Heart left ventricle (tissue), 16 donors: ENCODE measurements at regions of chr1 and their contacts with region 1.

Region 1: DNA sequence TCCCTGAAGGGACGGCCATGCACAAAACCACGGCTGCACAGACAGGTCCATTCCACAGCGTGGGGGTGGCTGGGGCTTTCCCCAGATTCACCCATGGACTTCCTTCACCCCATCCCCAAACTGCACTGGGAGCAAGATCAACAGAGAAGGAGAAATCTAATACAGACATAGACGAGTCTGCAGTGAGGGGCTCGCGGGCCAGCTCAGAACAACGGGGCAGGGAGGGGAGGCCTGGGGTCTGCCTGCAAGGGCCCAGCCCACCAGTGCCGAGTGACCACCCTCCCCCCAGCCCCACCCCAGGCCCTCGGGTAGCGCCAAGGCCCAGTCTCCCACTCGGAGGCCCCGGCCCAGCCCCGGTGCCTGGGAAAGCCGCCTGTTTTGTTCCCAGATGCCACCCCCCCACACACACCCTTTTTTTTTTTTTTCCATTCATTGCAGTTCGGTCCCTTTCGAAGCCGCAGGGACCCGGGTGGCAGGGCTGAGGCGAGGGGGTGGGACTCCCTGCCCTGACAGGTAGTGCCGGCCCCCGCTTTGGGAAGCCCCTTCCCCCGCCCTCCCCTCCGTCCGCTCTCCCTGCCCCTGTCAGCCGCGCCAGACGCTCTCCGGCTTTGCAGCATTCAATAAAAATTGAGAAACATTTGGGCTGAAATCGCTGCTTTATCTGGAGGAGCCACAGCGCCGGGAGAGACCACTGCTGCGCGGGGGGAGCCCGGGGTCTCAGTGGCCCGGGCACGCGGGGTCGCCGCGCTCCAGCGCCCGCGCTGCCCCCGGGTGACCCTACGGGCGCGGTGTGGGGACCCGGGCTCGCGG is 543 bp upstream of the EPHB2 start:
- DNase-seq: peak; percentile 34 to 76 (median 57)
- ATAC-seq: peak in 3 of 4 donors; percentile 35 to 57 (median 43)
- H3K4me3 ChIP-seq: peak overlapping the region in 11 of 12 donors; percentile 24 to 58 (median 43)
- H3K27ac ChIP-seq: peak overlapping the region in 1 of 12 donors; percentile 42
- H3K4me1 ChIP-seq: peaks cover 0 to 32% (median 4%) of the 10 kb centered on the region in 12 donors
- H3K27me3 ChIP-seq: peaks cover 0 to 41% (median 13%) of the 10 kb centered on the region in 9 donors
- CTCF ChIP-seq: no peak
- POLR2A ChIP-seq: no peak

Region 2: GRCh38 chr1:22575532-22576149 is 134.5 kb before region 1 on chr1:
- intact Hi-C with region 1: no loop called
- DNase-seq: no peak
- ATAC-seq: peak in 1 of 4 donors; percentile 59
- H3K4me3 ChIP-seq: no peak overlapping the region
- H3K27ac ChIP-seq: no peak overlapping the region
- H3K4me1 ChIP-seq: no peaks in the 10 kb centered on the region
- H3K27me3 ChIP-seq: peaks cover 0 to 20% (median 0%) of the 10 kb centered on the region in 9 donors
- CTCF ChIP-seq: no peak
- POLR2A ChIP-seq: no peak

Region 3: GRCh38 chr1:22930235-22930912 is 220.3 kb after region 1 on chr1:
- intact Hi-C with region 1: loop called in 5 of 10 experiments (anchors 2 to 10 kb)
- DNase-seq: peak; percentile 28 to 70 (median 39)
- ATAC-seq: peak; percentile 51 to 85 (median 79)
- H3K4me3 ChIP-seq: no peak overlapping the region
- H3K27ac ChIP-seq: no peak overlapping the region
- H3K4me1 ChIP-seq: no peaks in the 10 kb centered on the region
- H3K27me3 ChIP-seq: peaks cover 0 to 19% (median 0%) of the 10 kb centered on the region in 9 donors
- CTCF ChIP-seq: peak; percentile 34 to 71 (median 64)
- POLR2A ChIP-seq: no peak

Region 4: GRCh38 chr1:24070821-24071393 is 1360.8 kb after region 1 on chr1:
- intact Hi-C with region 1: no loop called
- DNase-seq: peak in 4 of 5 donors; percentile 77 to 80 (median 79)
- ATAC-seq: peak; percentile 63 to 73 (median 66)
- H3K4me3 ChIP-seq: no peak overlapping the region
- H3K27ac ChIP-seq: peak overlapping the region in 8 of 12 donors; percentile 4 to 68 (median 30)
- H3K4me1 ChIP-seq: peaks cover 0 to 38% (median 9%) of the 10 kb centered on the region in 12 donors
- H3K27me3 ChIP-seq: no peaks in the 10 kb centered on the region
- CTCF ChIP-seq: peak; percentile 82 to 91 (median 88)
- POLR2A ChIP-seq: peak in 1 of 2 donors; percentile 19